GM12878 (cell line): ENCODE measurements at regions of chr7 and their contacts with region 1.

Region 1: GRCh38 chr7:139645572-139646523 is 122.4 kb downstream of the CLEC2L start:
- DNase-seq: peak; percentile 28
- ATAC-seq: peak; percentile 43
- H3K4me3 ChIP-seq: no peak overlapping the region
- H3K27ac ChIP-seq: no peak overlapping the region
- H3K4me1 ChIP-seq: peaks cover 39% of the 10 kb centered on the region
- H3K27me3 ChIP-seq: no peaks in the 10 kb centered on the region
- CTCF ChIP-seq: peak; percentile 81 to 92 (median 87)
- EP300 ChIP-seq: no peak
- POLR2A ChIP-seq: no peak
- RAD21 ChIP-seq: peak; percentile 98

Region 2: GRCh38 chr7:139673230-139673629 is 27.4 kb after region 1 on chr7:
- CTCF ChIA-PET with region 1: interaction called, 85 read pairs
- POLR2A ChIA-PET with region 1: interaction called, 32 read pairs
- RAD21 ChIA-PET with region 1: interaction called, 95 read pairs
- SMC1A ChIA-PET with region 1: interaction called, 77 read pairs
- in situ Hi-C with region 1: no loop called
- intact Hi-C with region 1: loop called (anchors 1 kb)
- DNase-seq: peak; percentile 90
- ATAC-seq: peak; percentile 93
- H3K4me3 ChIP-seq: peak overlapping the region; percentile 17; the same call in 1 of the 2 replicates
- H3K27ac ChIP-seq: peak overlapping the region; percentile 85
- H3K4me1 ChIP-seq: peaks cover 33% of the 10 kb centered on the region
- H3K27me3 ChIP-seq: no peaks in the 10 kb centered on the region
- CTCF ChIP-seq: 0 out of 6 replicates have a peak, but pooled peaks of 1 of the 3 experiments have one; percentile 3
- EP300 ChIP-seq: peak in 1 of 2 experiments; percentile 56; a peak in 2 of 4 replicates
- POLR2A ChIP-seq: no peak
- RAD21 ChIP-seq: peak; percentile 32; the same call in 1 of the 2 replicates

Region 3: DNA sequence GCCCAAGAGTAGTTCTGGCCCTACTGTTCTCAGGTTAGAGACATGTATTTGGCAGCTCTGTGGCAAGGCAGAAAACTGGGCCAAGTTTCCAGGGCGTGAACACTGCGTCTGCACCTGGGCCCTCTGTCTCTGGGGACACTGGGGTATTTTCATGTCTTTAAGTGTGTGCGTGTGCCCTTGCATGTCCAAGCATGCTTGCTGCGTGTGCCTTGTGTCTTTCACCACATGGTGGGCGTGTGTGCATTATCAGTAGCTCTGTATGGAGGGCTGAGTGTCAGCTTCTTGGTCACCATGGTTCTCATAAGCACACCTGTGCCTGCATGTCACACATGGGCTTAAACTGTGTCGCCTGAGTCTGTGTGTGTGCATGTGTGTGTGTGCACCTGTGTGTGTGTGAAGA is 62.7 kb after region 1 on chr7:
- CTCF ChIA-PET with region 1: interaction called, 6 read pairs
- POLR2A ChIA-PET with region 1: interaction called, 4 read pairs
- RAD21 ChIA-PET with region 1: interaction called, 11 read pairs
- SMC1A ChIA-PET with region 1: interaction called, 28 read pairs
- in situ Hi-C with region 1: no loop called
- intact Hi-C with region 1: loop called (anchors 2 kb)
- DNase-seq: peak; percentile 58
- ATAC-seq: peak; percentile 75
- H3K4me3 ChIP-seq: no peak overlapping the region
- H3K27ac ChIP-seq: no peak overlapping the region
- H3K4me1 ChIP-seq: peaks cover 18% of the 10 kb centered on the region
- H3K27me3 ChIP-seq: no peaks in the 10 kb centered on the region
- CTCF ChIP-seq: no peak
- EP300 ChIP-seq: no peak
- POLR2A ChIP-seq: no peak
- RAD21 ChIP-seq: peak; percentile 30; the same call in 1 of the 2 replicates

Region 4: DNA sequence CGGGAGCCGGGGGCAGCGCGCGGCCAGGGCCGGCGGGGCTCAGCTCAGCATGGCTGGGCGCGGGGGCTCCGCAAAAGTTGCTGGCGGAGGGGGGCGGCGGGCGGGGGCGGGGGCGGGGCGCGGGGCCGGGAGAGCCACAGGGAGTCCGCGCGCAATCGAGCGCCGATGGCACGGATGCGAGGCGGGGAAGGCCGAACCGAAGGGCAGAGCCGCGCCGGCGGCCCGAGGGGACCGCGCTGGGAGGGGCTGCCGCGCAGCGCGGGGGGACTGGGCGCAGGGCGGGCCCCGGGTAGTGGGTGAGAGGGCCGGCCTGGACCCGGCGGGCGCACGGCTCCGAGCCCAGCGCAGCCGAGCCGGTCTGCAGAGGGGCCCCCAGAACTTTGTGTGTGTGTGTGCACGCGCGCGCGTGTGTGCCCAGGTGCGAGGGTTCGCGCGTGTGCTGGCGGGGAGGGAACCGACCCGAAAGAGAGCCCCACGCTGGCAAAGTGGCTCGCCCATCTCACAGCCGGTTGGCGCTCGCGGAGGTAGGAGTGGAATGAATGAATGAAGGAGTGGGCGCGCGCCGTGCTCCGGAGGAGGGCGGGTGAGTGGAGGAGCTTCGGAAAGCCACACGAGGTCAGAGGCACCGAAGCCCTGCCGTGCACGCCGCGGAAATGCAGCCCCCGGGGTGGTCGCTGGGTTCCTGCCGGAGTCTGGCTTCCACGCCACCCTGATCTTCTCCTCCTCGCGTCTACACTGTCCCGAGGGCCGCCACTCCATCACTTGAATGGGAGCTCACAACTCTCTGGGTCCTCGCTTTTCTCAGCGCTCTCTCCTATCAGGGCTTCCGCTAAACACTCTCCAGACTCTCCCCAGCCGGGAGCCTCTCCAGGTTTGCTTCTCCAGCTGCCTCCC is 132.3 kb after region 1 on chr7 and contains the start of gene HIPK2:
- CTCF ChIA-PET with region 1: interaction called, 56 read pairs
- POLR2A ChIA-PET with region 1: interaction called, 4 read pairs
- RAD21 ChIA-PET with region 1: interaction called, 26 read pairs
- SMC1A ChIA-PET with region 1: interaction called, 74 read pairs
- in situ Hi-C with region 1: loop called (anchors 5 kb)
- intact Hi-C with region 1: loop called (anchors 1 kb)
- DNase-seq: no peak
- ATAC-seq: peak; percentile 70
- H3K4me3 ChIP-seq: peak within 1 kb of the TSS; percentile 99
- H3K27ac ChIP-seq: peak within 1 kb of the TSS; percentile 64
- H3K4me1 ChIP-seq: peaks cover 14% of the 10 kb centered on the region
- H3K27me3 ChIP-seq: peaks cover 0 to 10% of the 10 kb centered on the region in 2 experiments; a peak in 2 of 4 replicates
- CTCF ChIP-seq: no peak
- EP300 ChIP-seq: no peak
- POLR2A ChIP-seq: peak; percentile 64; the same call in 1 of the 2 replicates
- RAD21 ChIP-seq: no peak
- polyA plus RNA-seq, gene HIPK2: 1.7 to 3.3 TPM

Region 5: DNA sequence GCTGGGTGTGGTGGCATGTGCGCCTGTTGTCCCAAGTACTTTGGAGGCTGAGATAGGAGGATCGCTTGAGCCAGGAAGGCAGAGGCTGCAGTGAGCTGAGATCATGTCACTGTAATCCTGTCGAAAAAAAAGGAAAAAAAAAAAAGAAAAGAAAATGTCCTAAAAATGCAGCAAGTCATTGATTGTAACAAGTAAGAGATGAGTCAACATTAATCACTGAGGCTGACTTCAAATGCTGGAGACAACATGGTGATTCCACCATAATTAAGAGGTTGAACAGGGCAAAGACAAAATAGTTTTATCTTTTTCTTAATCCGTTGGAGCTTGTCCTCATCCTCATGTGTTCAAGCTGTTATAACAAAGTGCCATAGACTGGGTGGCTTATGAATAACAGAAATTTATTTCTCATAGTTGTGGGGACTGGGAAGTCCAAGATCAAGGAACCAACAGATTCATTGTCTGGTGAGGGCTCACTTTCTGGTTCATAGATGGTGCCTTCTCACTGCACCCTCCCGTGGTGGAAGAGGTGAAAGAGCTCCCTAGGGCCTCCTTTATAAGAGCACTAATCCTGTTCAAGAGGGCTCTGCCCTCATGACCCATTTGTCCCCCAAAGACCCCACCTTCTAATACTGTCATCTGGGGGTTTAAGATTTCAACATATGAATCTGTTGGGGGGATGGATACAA is 243.5 kb after region 1 on chr7:
- CTCF ChIA-PET with region 1: interaction called, 8 read pairs
- POLR2A ChIA-PET with region 1: no interaction called
- RAD21 ChIA-PET with region 1: interaction called, 16 read pairs
- SMC1A ChIA-PET with region 1: interaction called, 13 read pairs
- in situ Hi-C with region 1: no loop called
- intact Hi-C with region 1: loop called (anchors 5 kb)
- DNase-seq: no peak
- ATAC-seq: no peak
- H3K4me3 ChIP-seq: no peak overlapping the region
- H3K27ac ChIP-seq: no peak overlapping the region
- H3K4me1 ChIP-seq: peaks cover 5% of the 10 kb centered on the region; the same call in 1 of the 2 replicates
- H3K27me3 ChIP-seq: no peaks in the 10 kb centered on the region
- CTCF ChIP-seq: no peak
- EP300 ChIP-seq: no peak
- POLR2A ChIP-seq: no peak
- RAD21 ChIP-seq: 0 out of 2 replicates have a peak, but pooled peaks have one; percentile 1

Region 6: DNA sequence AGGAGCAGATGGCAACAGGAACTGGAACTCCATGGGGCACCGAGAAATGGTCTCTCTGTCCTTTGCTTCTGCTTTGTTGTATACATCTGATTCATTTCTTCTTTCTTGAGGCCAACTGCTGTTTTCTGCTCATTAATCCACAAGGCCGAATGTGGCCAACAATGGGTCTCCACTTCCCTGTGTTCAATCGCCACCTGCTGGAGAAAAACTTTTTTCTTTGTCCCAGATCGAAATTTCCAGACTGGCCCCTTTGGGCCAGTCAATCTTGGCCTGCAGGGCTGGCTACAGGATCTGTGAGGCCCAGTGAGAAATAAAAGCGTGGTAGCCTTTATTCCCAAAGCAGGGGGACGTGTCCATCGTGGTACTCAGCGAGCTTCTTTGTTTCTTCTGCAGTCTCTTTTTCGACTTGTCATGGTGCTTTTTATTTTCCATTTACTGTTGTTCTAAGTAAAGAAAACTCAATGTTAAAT is 358.1 kb after region 1 on chr7:
- CTCF ChIA-PET with region 1: interaction called, 225 read pairs
- POLR2A ChIA-PET with region 1: interaction called, 3 read pairs
- RAD21 ChIA-PET with region 1: interaction called, 135 read pairs
- SMC1A ChIA-PET with region 1: interaction called, 121 read pairs
- in situ Hi-C with region 1: loop called (anchors 5 kb)
- intact Hi-C with region 1: loop called (anchors 1 kb)
- DNase-seq: peak; percentile 16
- ATAC-seq: peak; percentile 77
- H3K4me3 ChIP-seq: no peak overlapping the region
- H3K27ac ChIP-seq: no peak overlapping the region
- H3K4me1 ChIP-seq: no peaks in the 10 kb centered on the region
- H3K27me3 ChIP-seq: no peaks in the 10 kb centered on the region
- CTCF ChIP-seq: peak; percentile 58 to 69 (median 62)
- EP300 ChIP-seq: no peak
- POLR2A ChIP-seq: no peak
- RAD21 ChIP-seq: peak; percentile 86

Region 7: GRCh38 chr7:140249036-140249806 is 603.4 kb after region 1 on chr7:
- CTCF ChIA-PET with region 1: no interaction called
- POLR2A ChIA-PET with region 1: no interaction called
- RAD21 ChIA-PET with region 1: no interaction called
- SMC1A ChIA-PET with region 1: no interaction called
- in situ Hi-C with region 1: no loop called
- intact Hi-C with region 1: no loop called
- DNase-seq: no peak
- ATAC-seq: no peak
- H3K4me3 ChIP-seq: no peak overlapping the region
- H3K27ac ChIP-seq: no peak overlapping the region
- H3K4me1 ChIP-seq: no peaks in the 10 kb centered on the region
- H3K27me3 ChIP-seq: peaks cover 2 to 3% of the 10 kb centered on the region in 2 experiments; a peak in 3 of 4 replicates
- CTCF ChIP-seq: no peak
- EP300 ChIP-seq: no peak
- POLR2A ChIP-seq: no peak
- RAD21 ChIP-seq: no peak